ENCODE measurements at regions of chr14 and their contacts with region 1.

Region 1: DNA sequence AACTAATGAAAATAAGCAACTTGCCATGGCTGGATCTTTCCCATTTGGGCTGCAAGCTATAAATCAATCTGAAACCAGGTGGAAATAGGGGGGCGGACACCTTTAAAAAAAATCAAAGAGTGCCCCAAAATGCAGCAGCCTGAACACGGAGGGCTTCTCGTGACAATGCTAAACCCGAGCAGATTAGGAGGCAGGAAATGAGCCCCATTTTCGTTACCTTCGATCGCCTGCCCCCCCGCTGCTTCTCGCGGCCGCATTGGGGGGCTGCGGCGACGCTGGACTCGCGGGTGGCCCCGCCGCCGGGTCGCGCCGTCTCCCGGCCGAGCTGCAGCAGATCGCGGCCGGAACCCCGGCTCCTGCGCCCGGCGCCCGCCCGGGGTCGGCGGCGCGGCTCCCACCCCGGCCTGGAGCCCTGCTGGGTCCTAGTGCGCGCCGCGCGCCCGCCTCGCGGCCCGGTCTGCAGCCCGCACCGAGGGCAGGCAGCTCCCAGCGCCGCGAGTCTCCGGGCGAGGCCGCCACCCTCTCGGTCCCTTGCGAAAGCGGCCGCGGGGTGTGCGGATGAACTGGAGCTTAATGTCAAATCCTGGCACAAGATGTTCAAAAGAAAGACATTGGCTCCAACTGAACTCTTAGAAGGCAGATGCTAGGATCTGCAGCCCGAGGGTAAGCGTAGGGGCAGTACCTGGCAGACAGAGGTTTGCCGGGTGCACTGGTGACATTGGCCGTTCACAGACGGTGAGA is 201.9 kb upstream of the FOXN3 start:
- DNase-seq: peak; percentile 71
- H3K4me3 Mint-ChIP-seq: peak overlapping the region; percentile 94
- H3K27ac Mint-ChIP-seq: peak overlapping the region; percentile 97
- H3K4me1 Mint-ChIP-seq: peaks cover 63% of the 10 kb centered on the region
- H3K27me3 Mint-ChIP-seq: no peaks in the 10 kb centered on the region

Region 2: GRCh38 chr14:89276424-89276975 is 342.5 kb before region 1 on chr14:
- intact Hi-C with region 1: loop called (anchors 2 kb)
- DNase-seq: peak; percentile 66
- H3K4me3 Mint-ChIP-seq: peak overlapping the region; percentile 77
- H3K27ac Mint-ChIP-seq: peak overlapping the region; percentile 99
- H3K4me1 Mint-ChIP-seq: peaks cover 83% of the 10 kb centered on the region
- H3K27me3 Mint-ChIP-seq: no peaks in the 10 kb centered on the region

Region 3: DNA sequence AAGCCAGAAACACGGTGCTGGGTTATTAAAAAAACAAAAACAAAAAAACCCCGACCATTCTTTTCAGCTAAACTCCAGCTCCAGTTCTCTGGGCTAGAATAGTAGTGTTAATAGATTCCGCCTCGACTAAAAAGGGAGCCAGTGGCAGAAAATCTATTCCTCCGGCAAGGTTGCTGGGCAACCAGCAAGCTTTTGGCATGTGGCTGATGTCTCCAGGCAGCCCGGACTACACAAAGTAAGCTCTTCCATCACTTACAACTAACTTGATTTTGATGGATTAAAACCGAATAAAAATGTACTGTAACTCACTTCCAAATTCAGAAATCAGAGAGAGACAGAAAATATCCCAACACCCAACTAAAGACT is 75.6 kb before region 1 on chr14:
- intact Hi-C with region 1: no loop called
- DNase-seq: no peak
- H3K4me3 Mint-ChIP-seq: no peak overlapping the region
- H3K27ac Mint-ChIP-seq: no peak overlapping the region
- H3K4me1 Mint-ChIP-seq: peaks cover 30% of the 10 kb centered on the region
- H3K27me3 Mint-ChIP-seq: no peaks in the 10 kb centered on the region

Region 4: GRCh38 chr14:89641495-89642175 is 22.7 kb after region 1 on chr14:
- intact Hi-C with region 1: loop called (anchors 1 kb)
- DNase-seq: peak; percentile 42
- H3K4me3 Mint-ChIP-seq: peak overlapping the region; percentile 50
- H3K27ac Mint-ChIP-seq: peak overlapping the region; percentile 93
- H3K4me1 Mint-ChIP-seq: peaks cover 65% of the 10 kb centered on the region
- H3K27me3 Mint-ChIP-seq: no peaks in the 10 kb centered on the region

Region 5: DNA sequence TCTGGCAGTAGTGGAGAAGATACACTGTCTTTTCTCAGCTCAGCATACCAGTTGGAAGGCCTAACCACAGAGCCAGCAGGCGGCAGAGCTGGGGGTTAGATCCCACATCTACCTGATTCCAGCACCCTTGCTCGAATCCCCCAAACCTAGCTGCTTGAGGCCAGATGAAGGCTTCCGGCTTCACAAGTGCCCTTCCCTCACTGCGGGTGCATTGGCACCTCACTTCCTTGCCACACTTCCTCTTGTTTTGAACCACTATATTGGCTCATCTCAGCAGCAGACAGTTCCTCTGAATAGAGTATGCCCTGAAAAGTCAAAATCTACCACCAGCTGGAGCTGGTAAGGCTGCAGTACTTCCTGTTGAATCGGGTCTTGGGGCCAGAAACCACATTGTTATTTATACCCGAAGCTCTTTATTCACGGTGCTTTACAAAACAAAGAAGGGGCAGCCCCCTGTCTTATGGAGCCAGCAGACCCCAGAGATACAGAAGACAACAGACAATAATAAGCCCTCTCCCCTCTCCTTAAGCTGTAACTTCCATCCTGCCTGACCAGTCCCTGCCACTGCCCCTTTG is 101.8 kb after region 1 on chr14:
- intact Hi-C with region 1: loop called (anchors 2 kb)
- DNase-seq: peak; percentile 67
- H3K4me3 Mint-ChIP-seq: peak overlapping the region; percentile 54
- H3K27ac Mint-ChIP-seq: peak overlapping the region; percentile 96
- H3K4me1 Mint-ChIP-seq: peaks cover 64% of the 10 kb centered on the region
- H3K27me3 Mint-ChIP-seq: no peaks in the 10 kb centered on the region

Region 6: GRCh38 chr14:89773644-89774316 is 154.8 kb after region 1 on chr14:
- intact Hi-C with region 1: loop called (anchors 2 kb)
- DNase-seq: peak; percentile 39
- H3K4me3 Mint-ChIP-seq: peak overlapping the region; percentile 7
- H3K27ac Mint-ChIP-seq: no peak overlapping the region
- H3K4me1 Mint-ChIP-seq: peaks cover 23% of the 10 kb centered on the region
- H3K27me3 Mint-ChIP-seq: peaks cover 10% of the 10 kb centered on the region

Measured in activated T-helper 2 cell treated with anti-CD3 and anti-CD28 coated beads, Interferon-gamma antibody, Interleukin-2, Interleukin-4, amounts not matched to agents 10 μg/mL and 5 μg/mL and 100 μg/mL, durations not matched to agents 14 hours and 24 hours and 36 hours (primary cell).